IMR-90 (cell line): ENCODE measurements at regions of chr10 and their contacts with region 1.

Region 1: GRCh38 chr10:89861584-89862301 is 160.4 kb downstream of the KIF20B start:
- DNase-seq: peak; percentile 42
- ATAC-seq: peak; percentile 55
- H3K4me3 ChIP-seq: no peak overlapping the region
- H3K27ac ChIP-seq: peak overlapping the region; percentile 63; the same call in 1 of the 2 replicates
- H3K4me1 ChIP-seq: peaks cover 9% of the 10 kb centered on the region
- H3K27me3 ChIP-seq: peaks cover 7% of the 10 kb centered on the region
- CTCF ChIP-seq: no peak
- POLR2A ChIP-seq: no peak
- RAD21 ChIP-seq: no peak

Region 2: DNA sequence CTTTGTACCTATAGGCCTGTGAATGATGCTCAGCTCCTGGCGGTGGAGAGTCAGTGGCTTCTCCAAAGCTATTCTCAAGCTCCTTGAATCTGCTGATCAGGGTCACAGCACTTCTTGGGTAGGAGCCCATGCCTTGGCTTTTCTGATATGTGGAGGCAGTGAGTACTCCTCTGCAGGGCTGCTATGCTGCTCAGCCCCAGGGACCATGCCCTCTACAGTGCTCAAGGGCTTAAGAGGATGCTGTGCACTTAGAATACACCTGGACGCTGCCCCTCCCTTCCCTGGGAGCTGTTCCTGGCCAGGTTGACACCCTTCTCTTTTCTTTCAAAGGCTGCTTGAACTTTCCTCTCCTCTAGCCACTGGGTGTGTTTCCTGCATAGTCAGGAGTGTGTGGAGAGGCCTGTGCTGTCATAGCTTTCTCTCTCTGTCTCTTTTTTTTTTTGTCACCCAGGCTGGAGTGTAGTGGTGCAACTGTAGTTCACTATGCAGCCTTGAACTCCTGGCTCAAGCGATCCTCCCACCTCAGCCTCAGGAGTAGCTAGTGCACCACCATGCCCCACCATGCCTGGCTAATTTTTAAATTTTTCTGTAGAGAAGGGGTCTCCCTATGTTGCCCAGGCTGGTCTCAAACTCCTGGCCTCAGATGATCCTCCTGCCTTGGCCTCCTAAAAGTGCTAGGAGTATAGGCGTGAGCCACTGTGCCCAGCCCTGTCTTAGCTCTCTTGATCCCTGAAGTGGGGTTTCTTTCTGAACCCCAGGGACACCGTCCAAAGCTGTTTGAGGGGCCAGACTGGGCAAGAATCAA is 46.5 kb before region 1 on chr10:
- CTCF ChIA-PET with region 1: no interaction called
- POLR2A ChIA-PET with region 1: no interaction called
- dilution Hi-C with region 1: no loop called
- in situ Hi-C with region 1: no loop called
- intact Hi-C with region 1: loop called (anchors 1 kb)
- DNase-seq: no peak
- ATAC-seq: no peak
- H3K4me3 ChIP-seq: no peak overlapping the region
- H3K27ac ChIP-seq: no peak overlapping the region
- H3K4me1 ChIP-seq: no peaks in the 10 kb centered on the region
- H3K27me3 ChIP-seq: peaks cover 12% of the 10 kb centered on the region
- CTCF ChIP-seq: no peak
- POLR2A ChIP-seq: no peak
- RAD21 ChIP-seq: no peak

Region 3: DNA sequence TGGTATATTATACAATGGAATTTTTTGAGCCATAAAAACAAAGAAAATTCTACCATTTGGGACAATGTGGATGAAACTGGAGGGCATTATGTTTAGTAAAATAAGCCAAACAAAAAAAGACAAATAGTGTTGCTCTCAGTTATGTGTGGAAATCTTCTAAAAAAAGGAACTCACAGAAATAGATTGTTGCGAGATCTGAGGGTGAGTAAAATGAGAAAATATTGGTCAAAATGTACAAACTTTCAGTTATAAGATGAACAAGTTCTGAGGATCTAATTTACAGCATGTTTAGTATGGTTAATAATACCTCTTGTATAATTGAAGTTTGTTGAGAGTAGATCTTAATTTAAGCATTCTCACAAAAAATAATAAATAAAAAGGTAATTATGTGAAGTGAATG is 130.8 kb after region 1 on chr10:
- CTCF ChIA-PET with region 1: interaction called, 10 read pairs
- POLR2A ChIA-PET with region 1: no interaction called
- dilution Hi-C with region 1: no loop called
- in situ Hi-C with region 1: no loop called
- intact Hi-C with region 1: no loop called
- DNase-seq: no peak
- ATAC-seq: no peak
- H3K4me3 ChIP-seq: no peak overlapping the region
- H3K27ac ChIP-seq: no peak overlapping the region
- H3K4me1 ChIP-seq: no peaks in the 10 kb centered on the region
- H3K27me3 ChIP-seq: no peaks in the 10 kb centered on the region
- CTCF ChIP-seq: no peak
- POLR2A ChIP-seq: no peak
- RAD21 ChIP-seq: no peak